Heart left ventricle (tissue), 16 donors: ENCODE measurements at regions of chr9 and their contacts with region 1.

Region 1: GRCh38 chr9:128127990-128128835 is 684 bp upstream of the PTGES2 start:
- DNase-seq: peak; percentile 80 to 91 (median 87)
- ATAC-seq: peak; percentile 86 to 92 (median 88)
- H3K4me3 ChIP-seq: peak overlapping the region; percentile 53 to 99 (median 94)
- H3K27ac ChIP-seq: peak overlapping the region; percentile 91 to 100 (median 98)
- H3K4me1 ChIP-seq: peaks cover 3 to 45% (median 33%) of the 10 kb centered on the region in 12 donors
- H3K27me3 ChIP-seq: no peaks in the 10 kb centered on the region
- CTCF ChIP-seq: no peak
- POLR2A ChIP-seq: peak in 1 of 2 donors; percentile 54

Region 2: DNA sequence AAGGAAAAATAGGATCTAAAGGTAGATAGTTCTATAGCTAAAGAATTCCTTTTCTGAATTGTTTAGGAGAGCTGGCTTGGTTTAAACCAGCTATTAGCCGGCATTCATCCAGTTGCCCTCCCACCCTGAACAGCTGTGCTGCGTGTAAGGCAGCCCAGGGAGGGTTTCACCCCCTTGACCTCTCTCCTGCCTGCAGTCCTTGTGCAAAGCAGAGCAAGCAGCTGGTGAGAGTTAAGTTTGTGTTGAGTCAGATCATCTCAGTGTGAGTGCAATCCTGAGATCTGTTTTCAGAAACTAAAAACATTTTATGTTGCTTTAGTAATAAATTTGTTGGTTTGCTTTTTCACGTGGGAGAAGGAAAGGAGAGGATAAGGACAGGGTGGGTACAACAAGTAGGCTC is 47.2 kb before region 1 on chr9:
- intact Hi-C with region 1: no loop called
- DNase-seq: peak in 2 of 5 donors; percentile 71 to 74
- ATAC-seq: peak in 3 of 4 donors; percentile 70 to 86 (median 78)
- H3K4me3 ChIP-seq: no peak overlapping the region
- H3K27ac ChIP-seq: peak overlapping the region in 9 of 12 donors; percentile 12 to 69 (median 44)
- H3K4me1 ChIP-seq: peaks cover 0 to 64% (median 24%) of the 10 kb centered on the region in 12 donors
- H3K27me3 ChIP-seq: no peaks in the 10 kb centered on the region
- CTCF ChIP-seq: no peak
- POLR2A ChIP-seq: no peak

Region 3: GRCh38 chr9:128094166-128094967 is 33.8 kb before region 1 on chr9:
- intact Hi-C with region 1: loop called in 1 of 10 experiments (anchors 2 kb)
- DNase-seq: peak; percentile 90 to 95 (median 94)
- ATAC-seq: peak; percentile 81 to 86 (median 84)
- H3K4me3 ChIP-seq: peak overlapping the region in 10 of 12 donors; percentile 4 to 41 (median 27)
- H3K27ac ChIP-seq: peak overlapping the region; percentile 48 to 96 (median 80)
- H3K4me1 ChIP-seq: peaks cover 15 to 89% (median 54%) of the 10 kb centered on the region in 12 donors
- H3K27me3 ChIP-seq: no peaks in the 10 kb centered on the region
- CTCF ChIP-seq: no peak
- POLR2A ChIP-seq: peak; percentile 87 to 92

Region 4: GRCh38 chr9:128159784-128160602 is 31.8 kb after region 1 on chr9 and contains the start of gene BBLN:
- intact Hi-C with region 1: loop called in 1 of 10 experiments (anchors 2 kb)
- DNase-seq: peak; percentile 96 to 98 (median 96)
- ATAC-seq: peak; percentile 92 to 96 (median 94)
- H3K4me3 ChIP-seq: peak within 1 kb of the TSS; percentile 57 to 92 (median 76)
- H3K27ac ChIP-seq: peak within 1 kb of the TSS in 11 of 12 donors; percentile 60 to 88 (median 77)
- H3K4me1 ChIP-seq: peaks cover 0 to 23% (median 9%) of the 10 kb centered on the region in 12 donors
- H3K27me3 ChIP-seq: no peaks in the 10 kb centered on the region
- CTCF ChIP-seq: no peak
- POLR2A ChIP-seq: peak in 1 of 2 donors; percentile 67
- total RNA-seq, gene BBLN: 29.9 to 280 (median 46.4) TPM